Heart right ventricle (tissue), 16 donors: ENCODE measurements at regions of chr9 and their contacts with region 1.

Region 1: GRCh38 chr9:32289756-32290155 is 94.7 kb upstream of the ACO1 start:
- DNase-seq: no peak
- ATAC-seq: no peak
- H3K4me3 ChIP-seq: no peak overlapping the region
- H3K27ac ChIP-seq: no peak overlapping the region
- H3K4me1 ChIP-seq: no peaks in the 10 kb centered on the region
- H3K27me3 ChIP-seq: no peaks in the 10 kb centered on the region
- CTCF ChIP-seq: no peak

Region 2: DNA sequence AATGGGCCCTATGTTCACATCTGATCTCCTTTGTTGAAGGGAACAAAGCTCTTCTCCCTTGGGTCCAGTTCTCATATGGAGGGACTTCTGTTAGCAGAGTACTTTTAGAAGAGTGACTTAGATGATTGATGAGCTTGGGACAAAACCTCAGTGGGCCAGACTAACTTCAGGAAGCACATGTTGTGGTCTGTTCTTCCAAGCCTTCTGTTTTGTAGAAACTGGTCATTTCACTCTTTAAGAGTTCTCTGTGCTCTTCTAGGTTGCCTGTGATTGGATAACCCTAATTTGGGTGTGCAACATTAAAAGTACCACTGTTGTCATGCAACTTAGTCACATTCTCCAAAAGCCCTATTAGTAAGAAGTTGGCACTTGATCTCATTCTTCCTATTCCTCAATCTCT is 88.9 kb before region 1 on chr9:
- intact Hi-C with region 1: loop called in 1 of 10 experiments (anchors 10 kb)
- DNase-seq: no peak
- ATAC-seq: no peak
- H3K4me3 ChIP-seq: no peak overlapping the region
- H3K27ac ChIP-seq: no peak overlapping the region
- H3K4me1 ChIP-seq: no peaks in the 10 kb centered on the region
- H3K27me3 ChIP-seq: no peaks in the 10 kb centered on the region
- CTCF ChIP-seq: no peak

Region 3: GRCh38 chr9:32823551-32823950 is 533.8 kb after region 1 on chr9:
- intact Hi-C with region 1: no loop called
- DNase-seq: no peak
- ATAC-seq: no peak
- H3K4me3 ChIP-seq: no peak overlapping the region
- H3K27ac ChIP-seq: no peak overlapping the region
- H3K4me1 ChIP-seq: no peaks in the 10 kb centered on the region
- H3K27me3 ChIP-seq: peaks cover 0 to 4% (median 0%) of the 10 kb centered on the region in 7 donors
- CTCF ChIP-seq: no peak